PC-9 (cell line): ENCODE measurements at regions of chr16 and their contacts with region 1.

Region 1: DNA sequence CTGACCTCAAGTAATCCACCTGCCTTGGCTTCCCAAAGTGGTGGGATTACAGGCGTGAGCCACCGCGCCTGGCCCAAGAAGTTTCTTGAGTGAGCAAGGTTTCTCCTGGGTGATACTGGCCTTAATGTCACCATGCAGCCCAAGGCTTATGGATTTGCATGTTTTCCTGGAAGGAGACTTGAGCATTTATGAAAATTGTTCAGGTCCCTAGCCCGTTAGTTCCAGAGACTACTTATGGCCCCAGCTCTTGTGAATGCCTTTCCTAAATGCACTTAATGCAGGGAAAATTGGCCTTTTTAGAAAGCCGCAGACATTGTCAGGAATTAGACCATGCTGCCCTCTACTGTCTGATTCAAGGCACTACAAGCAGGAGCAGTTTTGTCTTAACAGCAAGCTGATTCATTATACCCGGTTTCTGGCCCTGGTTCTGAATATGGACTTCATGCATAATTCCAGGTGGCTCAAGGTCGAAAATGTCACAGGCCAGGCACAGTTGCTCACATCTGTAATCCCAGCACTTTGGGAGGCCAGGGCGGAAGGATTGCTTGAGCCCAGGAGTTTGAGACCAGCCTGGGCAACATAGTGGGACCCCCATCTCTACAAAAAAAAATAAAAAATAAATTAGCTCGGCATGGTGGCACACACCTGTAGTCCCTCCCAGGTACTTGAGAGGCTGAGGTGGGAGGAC is 91.3 kb downstream of the SNX29 start:
- DNase-seq: peak; percentile 55 to 59
- H3K4me3 ChIP-seq: no peak overlapping the region
- H3K27ac ChIP-seq: no peak overlapping the region
- H3K4me1 ChIP-seq: no peaks in the 10 kb centered on the region
- H3K27me3 ChIP-seq: no peaks in the 10 kb centered on the region
- CTCF ChIP-seq: peak; percentile 95

Region 2: GRCh38 chr16:11396241-11397048 is 671.4 kb before region 1 on chr16:
- CTCF ChIA-PET with region 1: no interaction called
- POLR2A ChIA-PET with region 1: no interaction called
- intact Hi-C with region 1: loop called (anchors 10 kb)
- DNase-seq: peak in 1 of 2 experiments; percentile 82
- H3K4me3 ChIP-seq: no peak overlapping the region
- H3K27ac ChIP-seq: no peak overlapping the region
- H3K4me1 ChIP-seq: 0 out of 2 replicates have a peak, but pooled peaks cover under 1% of the 10 kb centered on the region
- H3K27me3 ChIP-seq: no peaks in the 10 kb centered on the region
- CTCF ChIP-seq: peak; percentile 99

Region 3: DNA sequence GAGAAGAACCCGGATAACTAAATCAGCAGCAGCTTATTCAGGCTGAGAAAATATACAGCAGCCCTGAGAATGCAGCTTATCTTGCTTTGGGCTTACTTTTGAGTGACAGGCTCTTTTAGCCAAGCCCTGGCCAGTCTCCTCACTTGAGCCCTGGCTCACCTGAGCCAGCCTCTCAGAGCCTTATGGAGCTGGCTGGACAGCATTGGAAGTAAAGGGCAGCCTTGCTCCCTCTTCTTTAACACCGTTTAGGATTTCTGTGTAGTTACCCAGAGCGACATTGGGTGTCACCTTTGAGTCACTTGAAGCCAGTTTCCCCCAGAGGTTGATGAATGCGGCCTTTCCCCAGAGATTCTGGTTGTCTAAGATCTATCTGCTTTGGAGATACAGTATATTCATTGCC is 118.3 kb before region 1 on chr16:
- CTCF ChIA-PET with region 1: interaction called, 6 read pairs
- POLR2A ChIA-PET with region 1: no interaction called
- intact Hi-C with region 1: loop called (anchors 1 kb)
- DNase-seq: peak; percentile 50 to 53
- H3K4me3 ChIP-seq: no peak overlapping the region
- H3K27ac ChIP-seq: no peak overlapping the region
- H3K4me1 ChIP-seq: no peaks in the 10 kb centered on the region
- H3K27me3 ChIP-seq: no peaks in the 10 kb centered on the region
- CTCF ChIP-seq: peak; percentile 67

Region 4: DNA sequence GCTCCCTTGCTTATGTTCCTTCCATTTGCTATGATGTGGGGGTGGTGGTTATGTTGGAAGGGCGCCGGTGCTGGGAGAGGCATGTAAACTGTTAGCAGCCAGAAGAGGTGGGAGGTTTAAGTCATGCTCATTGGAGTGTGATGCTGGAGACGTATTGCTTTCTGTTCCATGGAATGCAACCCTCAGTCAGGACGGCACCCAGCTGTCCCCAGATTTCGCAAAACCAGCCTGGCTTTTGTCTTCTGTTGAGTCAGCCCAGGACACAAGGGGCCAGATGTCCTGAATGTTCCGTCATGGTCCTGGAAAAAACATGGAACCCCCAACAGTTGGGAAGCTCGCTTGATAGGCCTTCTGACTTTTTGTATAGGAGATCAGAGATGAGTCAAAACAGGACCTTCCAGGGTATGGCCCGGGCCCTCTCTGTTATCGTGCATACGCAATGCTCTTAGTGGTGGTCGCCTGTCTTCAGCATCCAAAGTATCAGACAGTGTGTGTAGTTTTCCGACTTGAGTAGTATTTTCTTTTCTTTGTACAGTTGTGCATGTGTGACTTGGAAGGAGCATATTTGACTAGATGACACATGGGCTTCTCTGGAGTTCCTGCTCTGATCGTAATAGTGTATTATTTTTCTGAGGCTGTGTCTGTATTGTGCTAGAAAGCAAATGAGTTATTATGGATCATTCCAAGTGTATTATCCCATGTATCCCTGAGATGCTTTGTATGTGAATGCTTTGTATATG is 110.6 kb after region 1 on chr16:
- CTCF ChIA-PET with region 1: no interaction called
- POLR2A ChIA-PET with region 1: no interaction called
- intact Hi-C with region 1: no loop called
- DNase-seq: no peak
- H3K4me3 ChIP-seq: no peak overlapping the region
- H3K27ac ChIP-seq: no peak overlapping the region
- H3K4me1 ChIP-seq: no peaks in the 10 kb centered on the region
- H3K27me3 ChIP-seq: no peaks in the 10 kb centered on the region
- CTCF ChIP-seq: no peak